CD14-positive monocyte (primary cell): ENCODE measurements at regions of chr11 and their contacts with region 1.

Region 1: GRCh38 chr11:723120-723883 is 17.3 kb downstream of the EPS8L2 start:
- DNase-seq: peak; percentile 44 to 61 (median 57)
- H3K4me3 ChIP-seq: peak overlapping the region in 1 of 3 experiments; percentile 46
- H3K4me3 Mint-ChIP-seq: peak overlapping the region; percentile 61 to 86
- H3K27ac ChIP-seq: no peak overlapping the region
- H3K27ac Mint-ChIP-seq: peak overlapping the region in 1 of 7 donors; percentile 43
- H3K4me1 ChIP-seq: peaks cover 34 to 54% of the 10 kb centered on the region in 2 donors
- H3K4me1 Mint-ChIP-seq: peaks cover 16% of the 10 kb centered on the region
- H3K27me3 ChIP-seq: peaks cover 8 to 67% of the 10 kb centered on the region in 2 donors
- H3K27me3 Mint-ChIP-seq: peaks cover 44 to 87% (median 65%) of the 10 kb centered on the region in 3 donors
- CTCF ChIP-seq: peak; percentile 85

Region 2: GRCh38 chr11:553988-554340 is 169.3 kb before region 1 on chr11:
- intact Hi-C with region 1: loop called (anchors 2 kb)
- DNase-seq: no peak
- H3K4me3 ChIP-seq: no peak overlapping the region
- H3K4me3 Mint-ChIP-seq: no peak overlapping the region
- H3K27ac ChIP-seq: no peak overlapping the region
- H3K27ac Mint-ChIP-seq: no peak overlapping the region
- H3K4me1 ChIP-seq: peaks cover 2 to 19% of the 10 kb centered on the region in 2 donors
- H3K4me1 Mint-ChIP-seq: peaks cover 4% of the 10 kb centered on the region
- H3K27me3 ChIP-seq: peaks cover 4 to 53% of the 10 kb centered on the region in 2 donors
- H3K27me3 Mint-ChIP-seq: peaks cover 29 to 64% (median 44%) of the 10 kb centered on the region in 3 donors
- CTCF ChIP-seq: no peak

Region 3: GRCh38 chr11:560305-561147 is 162.8 kb before region 1 on chr11 and contains the starts of genes LMNTD2 and RASSF7:
- intact Hi-C with region 1: loop called in 1 of 2 experiments (anchors 2 kb)
- DNase-seq: peak; percentile 81 to 90 (median 85)
- H3K4me3 ChIP-seq: peak within 1 kb of the TSS; percentile 54 to 89 (median 73)
- H3K4me3 Mint-ChIP-seq: peak within 1 kb of the TSS; percentile 81 to 89
- H3K27ac ChIP-seq: peak within 1 kb of the TSS in 1 of 2 donors; percentile 62
- H3K27ac Mint-ChIP-seq: peak within 1 kb of the TSS in 5 of 7 donors; percentile 40 to 77 (median 64)
- H3K4me1 ChIP-seq: peaks cover 14 to 35% of the 10 kb centered on the region in 2 donors
- H3K4me1 Mint-ChIP-seq: peaks cover 18% of the 10 kb centered on the region
- H3K27me3 ChIP-seq: peaks cover 4 to 36% of the 10 kb centered on the region in 2 donors
- H3K27me3 Mint-ChIP-seq: peaks cover 24 to 42% (median 36%) of the 10 kb centered on the region in 3 donors
- CTCF ChIP-seq: no peak
- polyA plus RNA-seq, gene LMNTD2: 0.67 to 10.6 (median 1.2) TPM
- polyA plus RNA-seq, gene RASSF7: 10.0 to 26.5 (median 12.4) TPM

Region 4: GRCh38 chr11:662689-663274 is 60.5 kb before region 1 on chr11:
- intact Hi-C with region 1: loop called (anchors 1 to 5 kb)
- DNase-seq: peak; percentile 46 to 57 (median 48)
- H3K4me3 ChIP-seq: no peak overlapping the region
- H3K4me3 Mint-ChIP-seq: no peak overlapping the region
- H3K27ac ChIP-seq: no peak overlapping the region
- H3K27ac Mint-ChIP-seq: peak overlapping the region in 1 of 7 donors; percentile 30
- H3K4me1 ChIP-seq: no peaks in the 10 kb centered on the region
- H3K4me1 Mint-ChIP-seq: peaks cover 5% of the 10 kb centered on the region
- H3K27me3 ChIP-seq: no peaks in the 10 kb centered on the region
- H3K27me3 Mint-ChIP-seq: peaks cover 2 to 4% (median 3%) of the 10 kb centered on the region in 3 donors
- CTCF ChIP-seq: peak; percentile 85

Region 5: DNA sequence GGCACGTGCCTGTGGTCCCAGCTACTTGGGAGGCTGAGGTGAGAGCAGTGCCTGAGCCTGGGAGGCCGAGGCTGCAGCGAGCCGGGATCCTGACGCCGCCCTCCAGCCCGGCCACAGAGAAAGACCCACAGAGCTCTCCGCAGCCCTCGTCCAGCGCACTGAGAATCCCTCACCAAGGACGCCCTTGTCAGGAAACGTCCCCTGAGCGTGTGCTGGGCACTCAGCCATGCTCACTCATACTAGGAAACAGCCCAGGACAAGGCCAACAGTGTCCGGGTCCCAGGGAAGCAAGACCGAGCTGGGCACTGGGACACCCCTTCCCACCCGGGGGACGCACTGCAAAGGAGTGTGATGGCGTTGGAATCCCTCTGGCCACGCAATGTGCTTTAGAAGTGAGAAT is 42.8 kb before region 1 on chr11:
- intact Hi-C with region 1: no loop called
- DNase-seq: no peak
- H3K4me3 ChIP-seq: no peak overlapping the region
- H3K4me3 Mint-ChIP-seq: no peak overlapping the region
- H3K27ac ChIP-seq: no peak overlapping the region
- H3K27ac Mint-ChIP-seq: no peak overlapping the region
- H3K4me1 ChIP-seq: no peaks in the 10 kb centered on the region
- H3K4me1 Mint-ChIP-seq: no peaks in the 10 kb centered on the region
- H3K27me3 ChIP-seq: no peaks in the 10 kb centered on the region
- H3K27me3 Mint-ChIP-seq: no peaks in the 10 kb centered on the region
- CTCF ChIP-seq: no peak

Region 6: GRCh38 chr11:737371-737770 is 14.1 kb after region 1 on chr11:
- intact Hi-C with region 1: no loop called
- DNase-seq: no peak
- H3K4me3 ChIP-seq: peak overlapping the region in 1 of 3 experiments; percentile 53
- H3K4me3 Mint-ChIP-seq: peak overlapping the region; percentile 62 to 85
- H3K27ac ChIP-seq: no peak overlapping the region
- H3K27ac Mint-ChIP-seq: peak overlapping the region in 1 of 7 donors; percentile 42
- H3K4me1 ChIP-seq: peaks cover 13 to 16% of the 10 kb centered on the region in 2 donors
- H3K4me1 Mint-ChIP-seq: peaks cover 19% of the 10 kb centered on the region
- H3K27me3 ChIP-seq: peaks cover 0 to 4% of the 10 kb centered on the region in 2 donors
- H3K27me3 Mint-ChIP-seq: peaks cover 18 to 26% (median 26%) of the 10 kb centered on the region in 3 donors
- CTCF ChIP-seq: no peak